GM12878 (cell line): ENCODE measurements at regions of chr17 and their contacts with region 1.

Region 1: DNA sequence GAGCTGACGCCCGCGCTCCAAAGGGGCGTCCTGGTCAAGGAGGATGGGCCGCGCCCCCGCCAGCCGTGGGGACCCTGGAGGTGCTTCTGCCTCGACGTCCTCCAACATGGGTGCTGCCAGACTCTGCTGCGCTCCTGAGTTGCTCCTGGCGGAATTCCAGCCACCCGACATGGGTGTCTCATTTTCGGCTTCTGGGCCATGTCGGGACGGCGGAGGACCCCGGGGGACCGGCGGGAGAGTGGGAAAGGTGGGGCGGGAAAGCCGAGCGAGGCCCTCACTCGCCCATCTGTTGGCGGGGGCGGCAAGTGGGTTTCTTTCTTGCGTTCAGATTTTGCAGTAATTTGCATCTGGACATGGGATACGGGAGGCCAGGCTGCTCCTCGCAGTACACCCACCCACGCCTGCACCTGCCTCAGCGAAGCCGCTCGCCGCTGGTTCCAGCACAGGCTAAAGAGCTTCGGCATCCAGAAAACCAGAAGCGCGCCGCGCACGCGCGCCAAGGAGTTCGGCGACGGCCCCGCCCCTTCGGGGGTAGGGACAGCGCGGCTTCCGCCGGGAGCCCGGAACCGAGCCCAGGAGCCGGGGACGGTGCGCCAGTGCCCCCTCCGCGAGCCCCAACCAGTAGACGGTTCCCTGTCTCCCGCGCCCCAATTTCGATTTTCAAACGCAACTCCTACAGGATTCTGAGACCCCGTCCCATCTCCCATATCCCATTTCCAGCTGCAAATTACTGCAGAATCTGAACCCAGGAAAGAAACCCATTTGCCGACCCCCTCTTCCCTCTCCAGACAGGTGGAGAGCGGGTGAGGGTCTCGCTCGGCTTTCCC is at the start of gene ARMC7:
- DNase-seq: no peak
- ATAC-seq: peak; percentile 87
- H3K4me3 ChIP-seq: peak within 1 kb of the TSS; percentile 97
- H3K27ac ChIP-seq: peak within 1 kb of the TSS; percentile 37
- H3K4me1 ChIP-seq: peaks cover 22% of the 10 kb centered on the region
- H3K27me3 ChIP-seq: no peaks in the 10 kb centered on the region; a peak in 1 of 4 replicates
- CTCF ChIP-seq: no peak
- EP300 ChIP-seq: no peak
- POLR2A ChIP-seq: peak; percentile 88
- RAD21 ChIP-seq: no peak
- polyA plus RNA-seq, gene ARMC7: 1.5 to 4.3 TPM

Region 2: GRCh38 chr17:75012346-75013091 is 97.1 kb before region 1 on chr17 and contains the start of gene MRPL58:
- CTCF ChIA-PET with region 1: interaction called, 30 read pairs
- POLR2A ChIA-PET with region 1: interaction called, 9 read pairs
- RAD21 ChIA-PET with region 1: interaction called, 17 read pairs
- SMC1A ChIA-PET with region 1: interaction called, 14 read pairs
- in situ Hi-C with region 1: no loop called
- intact Hi-C with region 1: no loop called
- DNase-seq: peak; percentile 60
- ATAC-seq: peak; percentile 95
- H3K4me3 ChIP-seq: peak within 1 kb of the TSS; percentile 94
- H3K27ac ChIP-seq: peak within 1 kb of the TSS; percentile 67
- H3K4me1 ChIP-seq: peaks cover 8% of the 10 kb centered on the region
- H3K27me3 ChIP-seq: no peaks in the 10 kb centered on the region; a peak in 1 of 4 replicates
- CTCF ChIP-seq: peak in 2 of 3 experiments; percentile 22 to 54; a peak in 4 of 6 replicates
- EP300 ChIP-seq: no peak
- POLR2A ChIP-seq: peak; percentile 99
- RAD21 ChIP-seq: no peak
- polyA plus RNA-seq, gene MRPL58: 23.0 to 43.7 TPM

Region 3: GRCh38 chr17:75024686-75025397 is 84.8 kb before region 1 on chr17:
- CTCF ChIA-PET with region 1: no interaction called
- POLR2A ChIA-PET with region 1: no interaction called
- RAD21 ChIA-PET with region 1: no interaction called
- SMC1A ChIA-PET with region 1: no interaction called
- in situ Hi-C with region 1: no loop called
- intact Hi-C with region 1: no loop called
- DNase-seq: no peak
- ATAC-seq: no peak
- H3K4me3 ChIP-seq: no peak overlapping the region
- H3K27ac ChIP-seq: no peak overlapping the region
- H3K4me1 ChIP-seq: no peaks in the 10 kb centered on the region
- H3K27me3 ChIP-seq: no peaks in the 10 kb centered on the region
- CTCF ChIP-seq: no peak
- EP300 ChIP-seq: no peak
- POLR2A ChIP-seq: 0 out of 2 replicates have a peak, but pooled peaks have one; percentile 19
- RAD21 ChIP-seq: no peak

Region 4: GRCh38 chr17:75069783-75070182 is 39.8 kb before region 1 on chr17:
- CTCF ChIA-PET with region 1: interaction called, 30 read pairs
- POLR2A ChIA-PET with region 1: interaction called, 3 read pairs
- RAD21 ChIA-PET with region 1: interaction called, 25 read pairs
- SMC1A ChIA-PET with region 1: interaction called, 11 read pairs
- in situ Hi-C with region 1: no loop called
- intact Hi-C with region 1: no loop called
- DNase-seq: no peak
- ATAC-seq: peak; percentile 68
- H3K4me3 ChIP-seq: no peak overlapping the region
- H3K27ac ChIP-seq: no peak overlapping the region
- H3K4me1 ChIP-seq: peaks cover 15% of the 10 kb centered on the region
- H3K27me3 ChIP-seq: no peaks in the 10 kb centered on the region
- CTCF ChIP-seq: peak in 2 of 3 experiments; percentile 35 to 50; a peak in 4 of 6 replicates
- EP300 ChIP-seq: no peak
- POLR2A ChIP-seq: no peak
- RAD21 ChIP-seq: 0 out of 2 replicates have a peak, but pooled peaks have one; percentile 24

Region 5: GRCh38 chr17:75124041-75124818 is 14.6 kb after region 1 on chr17:
- CTCF ChIA-PET with region 1: interaction called, 167 read pairs
- POLR2A ChIA-PET with region 1: interaction called, 53 read pairs
- RAD21 ChIA-PET with region 1: interaction called, 13 read pairs
- SMC1A ChIA-PET with region 1: interaction called, 77 read pairs
- in situ Hi-C with region 1: no loop called
- intact Hi-C with region 1: no loop called
- DNase-seq: no peak
- ATAC-seq: no peak
- H3K4me3 ChIP-seq: no peak overlapping the region
- H3K27ac ChIP-seq: no peak overlapping the region
- H3K4me1 ChIP-seq: peaks cover 10% of the 10 kb centered on the region
- H3K27me3 ChIP-seq: no peaks in the 10 kb centered on the region
- CTCF ChIP-seq: no peak
- EP300 ChIP-seq: no peak
- POLR2A ChIP-seq: no peak
- RAD21 ChIP-seq: no peak

Region 6: DNA sequence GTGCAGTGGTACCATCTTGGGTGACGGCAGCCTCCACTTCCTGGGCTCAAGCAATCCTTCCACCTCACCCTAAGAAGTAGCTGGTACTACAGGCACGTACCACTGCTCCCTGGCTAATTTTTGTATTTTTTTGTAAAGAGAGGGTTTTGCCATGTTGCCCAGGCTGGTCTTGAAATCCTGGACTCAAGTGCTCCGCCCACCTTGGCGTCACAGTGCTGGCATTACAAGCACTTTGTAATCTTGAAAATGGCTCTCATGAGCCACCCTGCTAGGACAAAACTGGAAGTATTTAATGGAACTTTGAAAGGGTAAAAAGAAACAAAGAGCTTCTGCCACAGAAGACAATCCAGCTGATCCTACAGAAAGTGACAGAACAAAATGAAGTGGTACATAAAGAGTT is 63.9 kb after region 1 on chr17:
- CTCF ChIA-PET with region 1: interaction called, 199 read pairs
- POLR2A ChIA-PET with region 1: interaction called, 12 read pairs
- RAD21 ChIA-PET with region 1: interaction called, 71 read pairs
- SMC1A ChIA-PET with region 1: interaction called, 54 read pairs
- in situ Hi-C with region 1: no loop called
- intact Hi-C with region 1: loop called (anchors 1 kb)
- DNase-seq: no peak
- ATAC-seq: no peak
- H3K4me3 ChIP-seq: no peak overlapping the region
- H3K27ac ChIP-seq: no peak overlapping the region
- H3K4me1 ChIP-seq: no peaks in the 10 kb centered on the region
- H3K27me3 ChIP-seq: no peaks in the 10 kb centered on the region
- CTCF ChIP-seq: no peak
- EP300 ChIP-seq: no peak
- POLR2A ChIP-seq: no peak
- RAD21 ChIP-seq: no peak

Region 7: GRCh38 chr17:75199886-75200618 is 90.4 kb after region 1 on chr17:
- CTCF ChIA-PET with region 1: interaction called, 293 read pairs
- POLR2A ChIA-PET with region 1: interaction called, 7 read pairs
- RAD21 ChIA-PET with region 1: interaction called, 131 read pairs
- SMC1A ChIA-PET with region 1: interaction called, 134 read pairs
- in situ Hi-C with region 1: loop called (anchors 5 kb)
- intact Hi-C with region 1: loop called (anchors 1 kb)
- DNase-seq: no peak
- ATAC-seq: no peak
- H3K4me3 ChIP-seq: no peak overlapping the region
- H3K27ac ChIP-seq: no peak overlapping the region
- H3K4me1 ChIP-seq: no peaks in the 10 kb centered on the region; the same call in 1 of the 2 replicates
- H3K27me3 ChIP-seq: no peaks in the 10 kb centered on the region
- CTCF ChIP-seq: no peak
- EP300 ChIP-seq: no peak
- POLR2A ChIP-seq: no peak
- RAD21 ChIP-seq: no peak

Region 8: GRCh38 chr17:75412455-75413317 is 303.1 kb after region 1 on chr17:
- CTCF ChIA-PET with region 1: interaction called, 10 read pairs
- POLR2A ChIA-PET with region 1: interaction called, 3 read pairs
- RAD21 ChIA-PET with region 1: interaction called, 9 read pairs
- SMC1A ChIA-PET with region 1: interaction called, 5 read pairs
- in situ Hi-C with region 1: no loop called
- intact Hi-C with region 1: loop called (anchors 5 kb)
- DNase-seq: no peak
- ATAC-seq: peak; percentile 93
- H3K4me3 ChIP-seq: no peak overlapping the region
- H3K27ac ChIP-seq: peak overlapping the region; percentile 20
- H3K4me1 ChIP-seq: peaks cover 15% of the 10 kb centered on the region
- H3K27me3 ChIP-seq: no peaks in the 10 kb centered on the region
- CTCF ChIP-seq: peak; percentile 73 to 89 (median 85)
- EP300 ChIP-seq: no peak
- POLR2A ChIP-seq: no peak
- RAD21 ChIP-seq: peak; percentile 94